ENCODE measurements at regions of chr1 and their contacts with region 1.

Region 1: GRCh38 chr1:7207875-7208646 is 422.8 kb downstream of the CAMTA1 start:
- DNase-seq: peak; percentile 40
- ATAC-seq: peak; percentile 57 to 67

Region 2: DNA sequence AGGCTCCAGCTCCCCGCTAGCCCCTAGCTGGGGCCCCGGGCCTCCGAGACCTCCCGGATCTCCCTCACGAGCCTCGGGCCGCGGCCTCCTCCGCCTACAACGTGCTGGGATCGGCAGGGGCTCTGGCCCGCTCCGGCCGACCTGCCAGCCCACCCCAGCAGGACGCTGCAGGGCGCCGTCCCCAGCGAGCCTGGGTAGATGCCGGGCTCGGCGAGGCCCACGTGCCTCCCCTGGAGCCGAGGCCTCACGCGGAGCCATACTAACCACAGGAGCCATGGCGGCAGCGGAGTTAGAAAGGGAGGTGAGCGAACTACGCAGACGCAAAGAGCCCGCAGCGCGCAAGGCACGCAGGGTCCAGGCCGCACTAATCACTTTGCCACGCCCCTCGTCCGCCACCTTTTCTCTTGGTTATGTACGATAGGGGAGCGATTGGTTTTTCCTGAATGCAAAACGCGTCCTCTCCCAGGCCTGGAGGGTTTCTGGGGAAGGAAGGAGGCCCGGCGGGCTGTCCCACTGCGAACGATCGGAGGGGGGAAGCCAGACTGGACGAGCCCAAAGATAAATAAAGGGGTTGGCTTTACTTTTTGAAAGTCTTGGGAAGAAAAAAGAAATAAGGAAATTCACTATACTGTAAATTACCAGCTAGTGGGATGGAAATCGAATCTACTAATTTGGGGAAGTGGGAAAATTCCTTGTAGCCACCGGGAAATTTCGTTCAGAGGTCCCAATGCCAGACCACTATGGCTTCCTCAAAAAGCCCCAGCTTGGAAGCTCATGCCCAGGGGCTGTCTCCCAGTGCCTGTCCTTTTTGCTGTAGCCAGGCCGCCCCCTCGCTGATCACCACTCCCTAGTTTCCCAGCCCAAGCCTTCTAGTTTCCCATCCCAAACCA is 1008.5 kb before region 1 on chr1 and contains the start of gene RPL22:
- intact Hi-C with region 1: no loop called
- DNase-seq: peak; percentile 99
- ATAC-seq: peak; percentile 98 to 99
- total RNA-seq, gene RPL22: 264 to 275 TPM

Region 3: DNA sequence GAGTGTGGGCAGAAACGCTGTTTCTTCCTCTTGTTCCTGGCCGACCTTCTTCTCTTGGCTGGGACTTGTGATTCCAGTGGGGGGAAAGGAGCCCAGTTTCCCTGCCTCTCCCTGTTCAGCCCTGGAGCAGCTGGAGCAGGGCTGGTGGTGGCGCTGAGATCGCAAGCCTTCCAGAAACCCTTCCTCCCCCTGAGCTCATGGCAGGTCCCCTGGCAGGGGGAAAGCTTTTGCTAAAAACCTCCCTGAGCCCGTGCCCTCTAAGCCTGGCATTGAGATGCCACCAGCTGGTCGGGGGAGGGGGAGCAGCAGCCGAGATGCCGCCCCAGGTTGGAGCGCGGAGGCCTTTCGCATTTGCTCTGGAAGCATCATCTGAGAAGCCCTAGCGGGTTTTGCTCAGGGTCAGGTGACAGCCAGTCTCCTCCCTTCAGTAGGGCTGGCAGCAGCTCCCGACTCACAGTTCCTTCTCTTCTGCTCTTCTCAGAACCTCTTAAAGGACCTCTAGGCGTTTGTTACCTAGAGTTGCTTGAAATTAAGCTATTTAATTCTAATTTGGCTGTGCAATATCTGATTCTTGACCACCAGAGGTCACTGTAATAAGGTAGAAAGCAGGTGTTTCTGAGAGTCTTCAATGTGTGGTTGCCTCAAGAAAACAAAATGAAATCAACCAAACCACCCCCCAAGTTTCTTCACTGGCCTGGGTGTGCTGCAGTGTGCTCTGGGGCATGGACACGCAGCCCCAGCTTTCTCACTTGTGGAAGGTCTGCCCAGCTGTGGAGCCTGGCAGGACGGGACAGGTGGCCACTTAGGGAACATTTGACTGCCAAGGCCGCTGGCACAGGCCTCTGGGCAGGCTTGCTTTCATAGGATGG is 165.5 kb before region 1 on chr1:
- intact Hi-C with region 1: loop called (anchors 2 to 10 kb)
- DNase-seq: no peak
- ATAC-seq: no peak

Region 4: GRCh38 chr1:7373876-7374562 is 166.0 kb after region 1 on chr1:
- intact Hi-C with region 1: no loop called
- DNase-seq: no peak
- ATAC-seq: peak in 1 of 2 donors; percentile 20